PC-9 (cell line): ENCODE measurements at regions of chr1 and their contacts with region 1.

Region 1: GRCh38 chr1:13813398-13814012 is 113.5 kb downstream of the PRDM2 start:
- DNase-seq: no peak
- H3K4me3 ChIP-seq: no peak overlapping the region
- H3K27ac ChIP-seq: no peak overlapping the region
- H3K4me1 ChIP-seq: no peaks in the 10 kb centered on the region
- H3K27me3 ChIP-seq: no peaks in the 10 kb centered on the region
- CTCF ChIP-seq: peak; percentile 62

Region 2: DNA sequence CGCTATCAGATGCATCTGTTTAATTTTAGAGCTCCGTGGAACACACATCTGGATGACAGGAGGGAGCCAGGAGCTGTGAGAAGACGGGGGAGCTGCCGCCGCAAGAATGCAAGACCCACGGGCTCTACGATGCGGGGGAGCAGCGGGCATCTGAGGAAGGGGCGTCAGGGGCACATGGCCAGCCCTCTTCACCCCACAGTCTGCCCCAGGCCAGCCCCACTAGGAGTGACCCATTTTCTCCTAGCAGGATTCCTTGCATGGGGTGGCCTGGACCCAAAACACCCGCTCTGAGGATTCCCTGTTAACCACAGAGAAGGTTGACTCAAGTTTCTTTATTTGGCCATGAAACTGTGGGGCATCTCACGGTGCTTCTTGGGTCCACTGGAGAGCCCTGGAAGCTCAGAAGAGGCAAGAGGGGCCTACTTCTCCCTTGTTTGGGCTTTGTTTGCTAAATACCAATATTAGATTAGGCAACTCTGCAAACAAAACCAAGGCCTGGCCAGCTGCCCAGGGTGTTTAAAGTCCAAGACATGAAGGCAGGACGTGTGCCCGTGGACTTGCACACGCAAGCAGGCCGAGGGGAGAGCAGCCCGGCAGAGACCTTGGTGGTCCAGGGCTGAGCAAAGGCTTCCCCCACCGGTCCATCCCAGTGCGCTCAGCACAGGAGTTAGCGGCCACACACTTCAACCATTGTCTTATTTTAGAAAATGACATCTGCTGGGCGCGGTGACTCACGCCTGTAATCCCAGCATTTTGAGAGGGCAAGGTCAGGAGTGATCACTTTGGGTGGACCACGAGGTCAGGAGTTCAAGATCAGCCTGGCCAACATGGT is 1285.3 kb before region 1 on chr1:
- CTCF ChIA-PET with region 1: no interaction called
- POLR2A ChIA-PET with region 1: no interaction called
- intact Hi-C with region 1: no loop called
- DNase-seq: peak; percentile 37 to 82
- H3K4me3 ChIP-seq: no peak overlapping the region
- H3K27ac ChIP-seq: peak overlapping the region; percentile 62
- H3K4me1 ChIP-seq: peaks cover 49% of the 10 kb centered on the region
- H3K27me3 ChIP-seq: no peaks in the 10 kb centered on the region
- CTCF ChIP-seq: no peak

Region 3: DNA sequence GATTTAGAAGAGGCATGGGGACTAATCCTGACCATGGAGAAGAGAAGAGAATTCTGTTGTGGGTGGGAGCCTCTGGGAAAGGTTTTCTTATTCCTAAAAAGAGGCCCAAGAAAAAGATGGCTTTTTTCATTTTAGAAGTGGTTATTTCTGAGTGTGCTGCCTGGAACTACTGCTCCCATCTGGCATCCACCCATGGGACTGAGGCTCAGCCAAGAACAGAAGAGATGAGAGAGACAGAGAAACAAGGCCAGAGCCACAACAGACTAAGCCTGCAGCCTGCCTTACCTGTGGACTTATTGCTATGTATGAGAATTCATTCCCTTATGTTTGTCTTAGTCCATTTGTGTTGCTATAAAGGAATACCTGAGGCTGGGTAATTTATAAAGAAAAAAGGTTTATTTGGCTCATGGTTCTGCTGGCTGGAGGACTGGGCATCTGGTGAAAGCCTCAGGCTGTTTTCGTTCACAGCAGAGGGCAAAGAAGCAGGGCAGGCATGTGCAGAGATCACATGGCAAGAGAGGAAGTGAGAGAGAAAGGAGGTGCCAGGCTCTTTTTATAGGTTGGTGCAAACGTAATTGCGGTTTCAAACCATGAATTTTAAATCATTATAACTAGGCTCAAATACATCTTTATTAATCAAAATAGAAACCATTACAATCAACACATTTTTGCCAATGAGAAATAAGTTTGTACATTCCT is 171.1 kb before region 1 on chr1:
- CTCF ChIA-PET with region 1: no interaction called
- POLR2A ChIA-PET with region 1: no interaction called
- intact Hi-C with region 1: no loop called
- DNase-seq: no peak
- H3K4me3 ChIP-seq: no peak overlapping the region
- H3K27ac ChIP-seq: no peak overlapping the region
- H3K4me1 ChIP-seq: no peaks in the 10 kb centered on the region
- H3K27me3 ChIP-seq: peaks cover 11% of the 10 kb centered on the region
- CTCF ChIP-seq: no peak

Region 4: DNA sequence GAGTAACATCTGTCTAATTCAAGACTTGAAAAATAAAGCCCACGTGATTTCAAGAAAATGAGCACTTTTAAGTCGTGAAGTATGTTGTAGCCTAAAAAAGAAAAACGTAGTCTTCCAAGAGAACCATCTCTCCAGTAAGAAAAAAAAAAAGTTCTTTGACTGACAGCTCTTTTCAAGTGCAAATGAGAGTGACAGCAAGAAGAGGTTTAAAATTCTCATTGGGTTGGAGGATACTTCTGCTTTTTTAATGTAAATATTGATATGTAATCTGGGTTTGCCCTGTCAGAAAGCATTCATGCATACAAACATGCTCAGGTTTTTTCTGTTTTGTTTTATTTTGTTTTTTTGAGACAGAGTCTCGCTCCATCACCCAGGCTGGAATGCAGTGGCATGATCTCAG is 145.8 kb before region 1 on chr1:
- CTCF ChIA-PET with region 1: no interaction called
- POLR2A ChIA-PET with region 1: no interaction called
- intact Hi-C with region 1: loop called (anchors 5 kb)
- DNase-seq: no peak
- H3K4me3 ChIP-seq: no peak overlapping the region
- H3K27ac ChIP-seq: no peak overlapping the region
- H3K4me1 ChIP-seq: no peaks in the 10 kb centered on the region
- H3K27me3 ChIP-seq: peaks cover 7% of the 10 kb centered on the region; the same call in 1 of the 2 replicates
- CTCF ChIP-seq: no peak